Posterior vena cava (tissue), 2 donors: ENCODE measurements at regions of chr9 and their contacts with region 1.

Region 1: DNA sequence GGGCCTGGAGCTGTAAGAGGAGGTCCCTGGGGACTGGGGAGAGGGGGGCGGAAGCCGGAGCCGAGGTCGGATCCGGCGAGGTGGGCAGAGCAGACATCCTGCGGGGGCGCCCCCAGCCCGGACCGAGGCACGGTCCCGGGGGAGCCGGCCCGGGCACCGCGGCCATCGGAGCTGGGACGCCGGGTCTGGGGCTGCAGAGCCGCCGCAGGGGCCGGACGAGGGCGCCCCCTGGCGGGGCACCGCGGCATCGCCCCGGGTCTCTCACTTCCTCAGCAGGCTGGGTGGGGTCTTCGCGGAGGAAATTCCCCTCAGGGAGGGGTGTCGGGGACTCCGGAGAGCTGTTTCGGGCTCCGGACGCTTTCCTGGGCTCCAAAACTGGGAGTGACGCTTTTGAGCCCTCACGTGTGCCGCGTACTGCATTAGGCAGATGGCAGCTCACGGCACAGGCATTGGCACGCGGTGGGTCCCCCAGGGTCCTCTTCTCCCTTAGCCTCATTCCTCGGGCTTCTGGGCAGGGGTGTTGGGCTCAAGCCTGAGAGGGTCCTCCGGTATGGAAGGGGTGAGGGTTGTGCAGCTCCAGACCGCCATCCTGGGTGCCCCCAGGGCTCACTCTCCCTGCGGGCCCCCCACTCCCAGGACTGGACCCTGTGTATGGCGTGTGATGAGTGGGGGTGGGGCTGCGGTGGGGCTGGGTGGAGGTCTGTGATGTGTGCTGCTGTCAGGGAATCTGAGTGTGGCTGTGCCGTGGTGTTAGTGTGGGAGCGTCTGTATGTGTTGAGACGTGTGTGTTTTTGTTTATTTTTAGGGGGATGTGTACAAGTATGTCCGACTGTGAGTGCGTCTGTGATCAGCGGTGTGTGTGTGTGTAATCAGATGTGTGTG is 29.6 kb downstream of the LHX2 start:
- DNase-seq: peak; percentile 86

Region 2: GRCh38 chr9:123528501-123528900 is 512.7 kb before region 1 on chr9:
- intact Hi-C with region 1: loop called in 1 of 2 experiments (anchors 5 kb)
- DNase-seq: no peak

Region 3: GRCh38 chr9:123544007-123544827 is 497.0 kb before region 1 on chr9:
- intact Hi-C with region 1: loop called in 1 of 2 experiments (anchors 10 kb)
- DNase-seq: no peak